ENCODE measurements at regions of chr7 and their contacts with region 1.

Region 1: DNA sequence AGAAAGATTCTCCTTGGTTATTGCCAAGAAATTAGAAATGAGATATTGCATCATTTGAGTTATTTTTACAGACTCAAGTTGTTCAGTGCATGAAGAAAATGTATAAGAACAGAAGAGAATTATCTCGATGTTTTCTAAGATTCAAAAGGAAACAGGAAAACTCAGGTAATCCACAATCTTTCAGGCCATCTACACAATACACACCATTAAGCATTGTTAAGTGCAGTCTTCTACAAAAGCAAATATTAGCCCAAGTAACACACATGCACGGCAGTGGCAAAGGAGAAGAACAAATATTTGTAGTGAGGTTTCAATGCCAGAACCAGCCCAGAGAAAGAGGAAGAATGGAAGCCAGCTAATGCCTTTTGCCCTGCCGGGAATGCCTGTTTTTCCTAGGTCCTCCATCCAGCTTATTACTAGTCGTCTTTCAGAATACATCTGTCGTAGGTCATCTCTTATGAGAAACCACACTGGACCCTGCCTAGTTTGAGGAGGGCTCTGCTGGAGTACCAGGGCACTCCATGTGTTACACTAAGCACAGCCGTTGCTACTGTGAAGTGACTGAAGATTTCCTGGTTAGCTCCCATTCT is 67.5 kb upstream of the C1GALT1 start:
- DNase-seq: peak; percentile 97
- ATAC-seq: peak; percentile 98
- H3K4me3 ChIP-seq: peak overlapping the region in 1 of 3 experiments; percentile 39; a peak in 1 of 6 replicates
- H3K27ac ChIP-seq: peak overlapping the region; percentile 69
- H3K4me1 ChIP-seq: peaks cover 91% of the 10 kb centered on the region
- H3K27me3 ChIP-seq: no peaks in the 10 kb centered on the region
- CTCF ChIP-seq: no peak
- EP300 ChIP-seq: peak; percentile 42 to 98; a peak in 2 of 4 replicates
- POLR2A ChIP-seq: no peak
- RAD21 ChIP-seq: no peak; the same call in 1 of the 2 replicates

Region 2: GRCh38 chr7:7148798-7149481 is 34.1 kb after region 1 on chr7:
- CTCF ChIA-PET with region 1: no interaction called
- POLR2A ChIA-PET with region 1: no interaction called
- in situ Hi-C with region 1: no loop called
- intact Hi-C with region 1: loop called (anchors 5 kb)
- DNase-seq: peak; percentile 91
- ATAC-seq: peak; percentile 97
- H3K4me3 ChIP-seq: peak overlapping the region in 2 of 3 experiments; percentile 18 to 48; a peak in 2 of 6 replicates
- H3K27ac ChIP-seq: peak overlapping the region; percentile 89
- H3K4me1 ChIP-seq: peaks cover 53% of the 10 kb centered on the region
- H3K27me3 ChIP-seq: no peaks in the 10 kb centered on the region
- CTCF ChIP-seq: no peak
- EP300 ChIP-seq: peak in 1 of 2 experiments; percentile 60; a peak in 1 of 4 replicates
- POLR2A ChIP-seq: 0 out of 4 replicates have a peak, but pooled peaks of 1 of the 2 experiments have one; percentile 27
- RAD21 ChIP-seq: no peak

Region 3: GRCh38 chr7:7157177-7157886 is 42.5 kb after region 1 on chr7:
- CTCF ChIA-PET with region 1: no interaction called
- POLR2A ChIA-PET with region 1: no interaction called
- in situ Hi-C with region 1: loop called (anchors 5 kb)
- intact Hi-C with region 1: no loop called
- DNase-seq: no peak
- ATAC-seq: peak; percentile 73
- H3K4me3 ChIP-seq: peak overlapping the region; percentile 39 to 63 (median 58)
- H3K27ac ChIP-seq: peak overlapping the region; percentile 55
- H3K4me1 ChIP-seq: peaks cover 66% of the 10 kb centered on the region
- H3K27me3 ChIP-seq: no peaks in the 10 kb centered on the region
- CTCF ChIP-seq: no peak
- EP300 ChIP-seq: no peak
- POLR2A ChIP-seq: no peak
- RAD21 ChIP-seq: no peak

Region 4: GRCh38 chr7:7176421-7177043 is 61.7 kb after region 1 on chr7:
- CTCF ChIA-PET with region 1: no interaction called
- POLR2A ChIA-PET with region 1: interaction called, 27 read pairs
- in situ Hi-C with region 1: no loop called
- intact Hi-C with region 1: no loop called
- DNase-seq: peak; percentile 81
- ATAC-seq: peak; percentile 64
- H3K4me3 ChIP-seq: peak overlapping the region in 1 of 3 experiments; percentile 17; a peak in 1 of 6 replicates
- H3K27ac ChIP-seq: peak overlapping the region; percentile 87
- H3K4me1 ChIP-seq: peaks cover 86% of the 10 kb centered on the region
- H3K27me3 ChIP-seq: no peaks in the 10 kb centered on the region
- CTCF ChIP-seq: no peak
- EP300 ChIP-seq: no peak; a peak in 1 of 4 replicates
- POLR2A ChIP-seq: no peak
- RAD21 ChIP-seq: no peak

Region 5: DNA sequence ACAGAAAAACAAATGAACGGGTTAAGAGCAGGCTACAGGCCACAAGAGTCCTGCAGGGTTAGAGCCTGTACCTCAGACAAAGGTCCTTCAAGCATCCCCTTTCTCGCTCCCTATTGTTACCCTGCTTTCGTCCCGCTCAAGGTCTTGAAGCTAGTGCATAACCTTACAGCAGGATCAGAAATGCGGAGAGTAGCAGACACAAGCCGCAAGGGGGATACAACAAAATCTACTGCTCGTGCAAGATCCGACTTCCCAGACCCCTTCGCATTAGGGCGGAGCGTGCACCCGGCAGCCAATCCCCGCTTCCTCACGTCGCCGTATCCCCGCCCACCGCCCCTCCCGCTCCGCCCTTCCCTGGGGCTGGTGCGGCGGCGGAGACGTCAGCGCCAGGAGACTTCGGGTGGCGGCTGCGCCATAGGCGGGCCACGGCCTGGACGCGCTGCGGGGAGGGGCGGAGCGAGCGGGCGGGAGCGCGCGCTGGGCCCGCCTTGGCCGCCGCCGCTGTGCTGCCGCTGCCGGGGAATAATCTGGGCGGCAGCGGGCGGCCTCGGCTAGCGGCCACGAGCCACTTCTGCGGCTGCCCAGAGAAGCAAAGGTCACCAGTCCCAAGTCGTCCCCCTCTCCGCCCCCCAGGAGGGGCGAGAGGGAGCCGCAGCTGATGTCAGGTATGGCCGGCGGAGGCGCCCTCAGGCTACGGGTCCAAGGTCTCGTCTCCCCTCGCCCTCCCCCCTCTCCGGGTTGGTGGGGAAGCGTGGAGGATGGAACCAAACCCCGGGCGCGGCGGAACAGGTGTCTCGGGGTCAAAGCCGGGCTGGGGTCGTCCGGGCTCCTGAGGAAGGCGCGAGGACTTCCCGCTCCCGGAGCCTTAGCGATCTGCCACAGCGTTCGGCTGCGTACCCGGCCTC is 67.6 kb after region 1 on chr7 and contains the start of gene C1GALT1:
- CTCF ChIA-PET with region 1: no interaction called
- POLR2A ChIA-PET with region 1: interaction called, 27 read pairs
- in situ Hi-C with region 1: no loop called
- intact Hi-C with region 1: loop called (anchors 1 kb)
- DNase-seq: peak; percentile 95
- ATAC-seq: peak; percentile 87
- H3K4me3 ChIP-seq: peak within 1 kb of the TSS; percentile 79 to 96 (median 83)
- H3K27ac ChIP-seq: peak within 1 kb of the TSS; percentile 98
- H3K4me1 ChIP-seq: peaks cover 63% of the 10 kb centered on the region
- H3K27me3 ChIP-seq: no peaks in the 10 kb centered on the region; a peak in 1 of 5 replicates
- CTCF ChIP-seq: peak; percentile 77
- EP300 ChIP-seq: peak; percentile 11 to 36; a peak in 1 of 4 replicates
- POLR2A ChIP-seq: peak; percentile 90 to 96
- RAD21 ChIP-seq: peak; percentile 73
- total RNA-seq, gene C1GALT1: 65.9 and 68.2 TPM in 2 replicates

Region 6: DNA sequence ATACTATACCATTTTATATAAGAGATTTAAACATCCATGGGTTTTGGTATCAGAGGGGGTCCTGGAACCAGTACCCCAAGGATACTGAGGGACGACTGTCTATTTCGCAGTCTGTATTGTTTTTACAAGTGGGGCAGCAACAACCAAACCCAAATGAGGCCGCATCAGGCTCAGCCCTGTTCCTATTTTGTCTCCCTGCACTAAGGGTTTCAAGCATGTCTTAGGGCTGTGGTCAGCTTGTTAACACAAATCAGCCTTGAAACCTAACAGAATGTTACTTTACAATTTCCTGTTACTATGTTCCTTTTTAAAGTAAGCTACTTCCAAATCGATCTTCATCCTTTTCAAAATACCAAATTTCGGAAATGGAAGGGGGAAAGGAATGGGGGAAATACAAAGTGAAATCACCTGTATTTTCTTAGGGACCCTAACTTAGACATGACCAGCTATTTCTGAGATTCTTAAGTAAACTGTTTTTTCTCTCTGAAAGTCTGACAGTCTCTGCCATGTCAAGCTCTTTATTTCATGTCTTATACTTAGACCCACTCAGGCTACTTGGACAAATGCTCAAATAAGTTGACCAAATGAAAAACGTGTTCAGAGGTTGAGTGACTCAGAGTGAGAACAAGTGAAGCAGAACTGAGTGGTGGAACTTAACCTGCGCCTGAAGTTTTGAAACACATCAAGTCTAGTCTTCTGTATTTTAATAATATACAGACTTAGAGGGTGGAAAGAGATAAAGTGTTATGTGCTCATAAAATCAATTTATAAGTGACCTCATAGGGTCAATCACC is 143.3 kb after region 1 on chr7:
- CTCF ChIA-PET with region 1: no interaction called
- POLR2A ChIA-PET with region 1: no interaction called
- in situ Hi-C with region 1: no loop called
- intact Hi-C with region 1: no loop called
- DNase-seq: no peak
- ATAC-seq: no peak
- H3K4me3 ChIP-seq: no peak overlapping the region
- H3K27ac ChIP-seq: no peak overlapping the region
- H3K4me1 ChIP-seq: peaks cover 20% of the 10 kb centered on the region
- H3K27me3 ChIP-seq: no peaks in the 10 kb centered on the region
- CTCF ChIP-seq: no peak
- EP300 ChIP-seq: no peak
- POLR2A ChIP-seq: no peak
- RAD21 ChIP-seq: no peak

Measured in HepG2 (cell line).